Posterior vena cava (tissue), 2 donors: ENCODE measurements at regions of chr13 and their contacts with region 1.

Region 1: GRCh38 chr13:81383444-81383843 is 1042.5 kb upstream of the SPRY2 start:
- DNase-seq: no peak

Region 2: DNA sequence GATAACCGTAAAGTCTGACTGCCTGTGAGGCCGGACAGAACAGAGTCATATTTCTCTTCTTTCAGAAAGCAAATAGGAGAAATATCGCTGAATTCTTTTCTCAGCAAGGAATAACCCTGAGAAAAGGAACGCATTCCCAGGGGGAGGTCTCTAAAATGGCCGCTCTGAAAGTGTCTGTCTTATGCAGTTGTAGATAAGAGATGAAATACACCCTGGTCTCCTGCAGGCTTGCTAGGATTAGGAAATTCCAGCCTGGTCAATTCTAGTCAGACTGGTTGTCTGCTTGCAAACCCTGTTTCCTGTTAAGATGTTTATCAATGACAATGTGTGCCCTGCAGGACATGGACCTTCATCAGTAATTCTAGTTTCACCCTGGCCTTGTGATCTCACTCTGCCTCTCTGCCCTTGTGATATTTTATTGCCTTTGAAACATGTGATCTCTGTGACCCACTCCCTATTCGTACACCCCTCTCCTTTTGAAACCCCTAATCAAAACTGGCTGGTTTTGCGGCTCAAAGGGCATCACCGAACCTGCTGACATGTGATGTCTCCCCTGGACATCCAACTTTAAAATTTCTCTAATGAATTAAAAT is 107.7 kb before region 1 on chr13:
- intact Hi-C with region 1: no loop called
- DNase-seq: no peak

Region 3: DNA sequence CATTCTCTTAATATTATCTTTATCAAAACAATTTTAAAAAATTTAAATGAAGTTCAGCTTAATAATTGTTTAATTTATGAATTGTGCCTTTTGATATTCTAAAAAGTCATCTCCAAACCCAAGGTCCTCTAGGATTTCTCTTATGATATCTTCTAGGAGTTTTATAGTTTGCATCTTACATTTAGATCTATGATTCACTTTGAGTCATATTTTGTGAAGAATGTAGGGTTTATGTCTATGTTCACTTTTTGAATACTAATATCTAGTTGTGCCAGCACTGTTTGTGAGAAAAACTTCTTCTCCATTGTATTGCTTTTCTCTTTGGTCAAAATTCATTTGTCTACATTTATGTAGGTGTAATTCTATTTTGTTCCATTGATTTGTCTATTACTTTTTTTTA is 25.8 kb after region 1 on chr13:
- intact Hi-C with region 1: loop called in 1 of 2 experiments (anchors 1 kb)
- DNase-seq: no peak

Region 4: GRCh38 chr13:82675024-82675423 is 1291.6 kb after region 1 on chr13:
- intact Hi-C with region 1: no loop called
- DNase-seq: no peak